ENCODE measurements at regions of chr14 and their contacts with region 1.

Region 1: DNA sequence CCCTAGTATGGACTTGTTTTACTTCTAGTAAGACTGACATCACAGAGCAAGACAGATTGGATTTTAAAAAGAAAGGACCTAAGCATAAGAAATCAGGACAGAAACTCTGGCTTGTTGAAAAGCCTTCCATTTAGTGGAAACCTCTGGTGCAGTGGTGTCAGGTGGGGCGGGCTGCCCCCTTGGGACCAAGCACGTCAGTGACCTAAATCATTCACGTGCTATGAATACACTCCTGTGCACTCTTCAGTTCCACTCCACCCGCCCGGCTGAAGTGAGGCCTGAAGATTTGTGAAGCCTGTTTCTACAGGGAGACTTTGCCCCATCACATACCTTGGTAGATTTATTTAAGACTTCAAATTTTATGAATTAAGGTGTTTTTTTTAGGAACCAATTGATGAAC is 58.2 kb upstream of the STRN3 start:
- DNase-seq: no peak
- ATAC-seq: no peak
- H3K4me3 ChIP-seq: no peak overlapping the region
- H3K27ac ChIP-seq: no peak overlapping the region
- H3K4me1 ChIP-seq: no peaks in the 10 kb centered on the region
- H3K27me3 ChIP-seq: no peaks in the 10 kb centered on the region
- CTCF ChIP-seq: no peak
- POLR2A ChIP-seq: no peak

Region 2: GRCh38 chr14:30974628-30975027 is 109.8 kb before region 1 on chr14:
- intact Hi-C with region 1: loop called (anchors 10 kb)
- DNase-seq: no peak
- ATAC-seq: no peak
- H3K4me3 ChIP-seq: no peak overlapping the region
- H3K27ac ChIP-seq: no peak overlapping the region
- H3K4me1 ChIP-seq: peaks cover 21% of the 10 kb centered on the region
- H3K27me3 ChIP-seq: no peaks in the 10 kb centered on the region
- CTCF ChIP-seq: no peak
- POLR2A ChIP-seq: no peak

Region 3: DNA sequence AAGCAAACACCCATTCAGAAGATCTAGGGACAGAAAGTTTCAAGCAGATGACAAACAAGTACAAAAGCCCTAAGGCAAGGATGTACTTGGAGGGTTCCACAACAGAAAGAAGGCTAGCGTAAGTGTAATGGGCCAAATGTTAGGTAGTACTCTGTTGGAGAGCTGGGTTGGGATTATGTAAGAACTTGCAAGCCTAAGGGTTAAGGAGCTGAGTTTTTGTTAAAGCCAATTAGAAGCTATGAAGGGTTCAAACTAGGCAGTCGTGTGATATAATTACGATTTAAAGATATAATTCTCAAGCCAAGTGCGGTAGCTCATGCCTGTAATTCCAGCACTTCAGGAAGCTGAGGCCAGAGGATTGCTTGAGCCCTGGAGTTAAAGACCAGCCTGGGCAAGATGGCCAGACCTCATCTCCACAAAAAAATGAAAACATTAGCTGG is 81.9 kb after region 1 on chr14:
- intact Hi-C with region 1: no loop called
- DNase-seq: no peak
- ATAC-seq: no peak
- H3K4me3 ChIP-seq: no peak overlapping the region
- H3K27ac ChIP-seq: no peak overlapping the region
- H3K4me1 ChIP-seq: peaks cover 18% of the 10 kb centered on the region
- H3K27me3 ChIP-seq: no peaks in the 10 kb centered on the region
- CTCF ChIP-seq: no peak
- POLR2A ChIP-seq: no peak